Activated CD4-positive, alpha-beta memory T cell treated with anti-CD3 and anti-CD28 coated beads for 36 hours (primary cell): ENCODE measurements at regions of chr3 and their contacts with region 1.

Region 1: GRCh38 chr3:101936419-101937356 is 87.4 kb downstream of the NFKBIZ start:
- DNase-seq: peak; percentile 65
- H3K4me3 Mint-ChIP-seq: peak overlapping the region; percentile 36
- H3K27ac Mint-ChIP-seq: peak overlapping the region; percentile 50
- H3K4me1 Mint-ChIP-seq: peaks cover 25% of the 10 kb centered on the region
- H3K27me3 Mint-ChIP-seq: peaks cover 15% of the 10 kb centered on the region

Region 2: GRCh38 chr3:101561630-101562328 is 374.9 kb before region 1 on chr3 and contains the start of gene TRMT10C:
- CTCF ChIA-PET with region 1: no interaction called
- POLR2A ChIA-PET with region 1: no interaction called
- intact Hi-C with region 1: no loop called
- DNase-seq: peak; percentile 96
- H3K4me3 Mint-ChIP-seq: peak within 1 kb of the TSS; percentile 97
- H3K27ac Mint-ChIP-seq: peak within 1 kb of the TSS; percentile 96
- H3K4me1 Mint-ChIP-seq: peaks cover 37% of the 10 kb centered on the region
- H3K27me3 Mint-ChIP-seq: peaks cover 3% of the 10 kb centered on the region
- total RNA-seq, gene TRMT10C: 39.5 to 43.2 TPM

Region 3: GRCh38 chr3:101685870-101686412 is 250.7 kb before region 1 on chr3:
- CTCF ChIA-PET with region 1: no interaction called
- POLR2A ChIA-PET with region 1: no interaction called
- intact Hi-C with region 1: loop called (anchors 5 kb)
- DNase-seq: no peak
- H3K4me3 Mint-ChIP-seq: peak overlapping the region; percentile 99
- H3K27ac Mint-ChIP-seq: peak overlapping the region; percentile 99
- H3K4me1 Mint-ChIP-seq: peaks cover 40% of the 10 kb centered on the region
- H3K27me3 Mint-ChIP-seq: no peaks in the 10 kb centered on the region

Region 4: GRCh38 chr3:101827211-101828174 is 109.2 kb before region 1 on chr3:
- CTCF ChIA-PET with region 1: no interaction called
- POLR2A ChIA-PET with region 1: interaction called, 6 read pairs
- intact Hi-C with region 1: loop called (anchors 1 kb)
- DNase-seq: peak; percentile 95
- H3K4me3 Mint-ChIP-seq: peak overlapping the region; percentile 85
- H3K27ac Mint-ChIP-seq: peak overlapping the region; percentile 96
- H3K4me1 Mint-ChIP-seq: peaks cover 63% of the 10 kb centered on the region
- H3K27me3 Mint-ChIP-seq: no peaks in the 10 kb centered on the region

Region 5: GRCh38 chr3:101926594-101927105 is 10.0 kb before region 1 on chr3:
- CTCF ChIA-PET with region 1: interaction called, 9 read pairs
- POLR2A ChIA-PET with region 1: interaction called, 7 read pairs
- intact Hi-C with region 1: loop called (anchors 1 kb)
- DNase-seq: no peak
- H3K4me3 Mint-ChIP-seq: no peak overlapping the region
- H3K27ac Mint-ChIP-seq: no peak overlapping the region
- H3K4me1 Mint-ChIP-seq: peaks cover 29% of the 10 kb centered on the region
- H3K27me3 Mint-ChIP-seq: peaks cover 6% of the 10 kb centered on the region

Region 6: DNA sequence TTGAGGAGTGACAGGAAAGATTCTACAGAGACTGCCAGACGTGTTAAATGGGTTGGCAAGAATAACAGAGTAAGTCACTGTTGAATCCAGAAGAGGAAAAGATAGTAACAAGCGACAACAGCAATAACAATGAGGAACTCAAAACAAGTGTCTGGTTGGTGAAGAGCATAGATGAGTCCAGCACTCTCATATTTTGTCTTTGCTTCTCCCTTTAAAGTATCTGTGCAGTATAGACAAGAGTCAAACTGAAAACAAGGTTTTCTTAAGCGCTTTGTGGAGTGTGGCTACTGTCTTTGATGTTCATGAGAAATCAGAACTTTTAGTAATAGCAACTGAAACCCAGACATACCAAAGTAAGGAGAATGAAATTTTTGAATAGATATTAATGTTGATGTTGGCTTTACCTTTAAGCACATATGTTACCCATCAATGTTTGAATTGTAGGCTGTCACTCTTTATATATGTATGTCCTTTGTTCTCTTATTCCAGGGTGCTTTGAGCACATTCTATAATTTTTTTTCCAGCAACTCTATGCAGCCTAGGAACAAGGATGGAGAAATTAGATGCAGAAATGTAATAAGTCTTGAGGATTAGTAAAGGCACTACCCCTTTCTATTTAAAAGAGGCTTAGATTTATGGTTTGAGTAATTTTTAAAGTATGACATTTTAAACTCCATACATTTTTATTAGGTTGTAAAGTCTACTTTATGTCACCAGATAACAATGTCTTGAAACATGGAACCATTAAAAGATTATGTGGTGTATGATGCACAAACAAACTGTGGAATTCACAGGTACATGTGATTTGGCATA is 98.2 kb after region 1 on chr3:
- CTCF ChIA-PET with region 1: no interaction called
- POLR2A ChIA-PET with region 1: no interaction called
- intact Hi-C with region 1: loop called (anchors 5 kb)
- DNase-seq: no peak
- H3K4me3 Mint-ChIP-seq: no peak overlapping the region
- H3K27ac Mint-ChIP-seq: no peak overlapping the region
- H3K4me1 Mint-ChIP-seq: no peaks in the 10 kb centered on the region
- H3K27me3 Mint-ChIP-seq: no peaks in the 10 kb centered on the region

Region 7: GRCh38 chr3:102163036-102163827 is 226.5 kb after region 1 on chr3:
- CTCF ChIA-PET with region 1: no interaction called
- POLR2A ChIA-PET with region 1: no interaction called
- intact Hi-C with region 1: loop called (anchors 5 kb)
- DNase-seq: no peak
- H3K4me3 Mint-ChIP-seq: no peak overlapping the region
- H3K27ac Mint-ChIP-seq: no peak overlapping the region
- H3K4me1 Mint-ChIP-seq: peaks cover 23% of the 10 kb centered on the region
- H3K27me3 Mint-ChIP-seq: no peaks in the 10 kb centered on the region